ENCODE measurements at regions of chr18 and their contacts with region 1.

Region 1: DNA sequence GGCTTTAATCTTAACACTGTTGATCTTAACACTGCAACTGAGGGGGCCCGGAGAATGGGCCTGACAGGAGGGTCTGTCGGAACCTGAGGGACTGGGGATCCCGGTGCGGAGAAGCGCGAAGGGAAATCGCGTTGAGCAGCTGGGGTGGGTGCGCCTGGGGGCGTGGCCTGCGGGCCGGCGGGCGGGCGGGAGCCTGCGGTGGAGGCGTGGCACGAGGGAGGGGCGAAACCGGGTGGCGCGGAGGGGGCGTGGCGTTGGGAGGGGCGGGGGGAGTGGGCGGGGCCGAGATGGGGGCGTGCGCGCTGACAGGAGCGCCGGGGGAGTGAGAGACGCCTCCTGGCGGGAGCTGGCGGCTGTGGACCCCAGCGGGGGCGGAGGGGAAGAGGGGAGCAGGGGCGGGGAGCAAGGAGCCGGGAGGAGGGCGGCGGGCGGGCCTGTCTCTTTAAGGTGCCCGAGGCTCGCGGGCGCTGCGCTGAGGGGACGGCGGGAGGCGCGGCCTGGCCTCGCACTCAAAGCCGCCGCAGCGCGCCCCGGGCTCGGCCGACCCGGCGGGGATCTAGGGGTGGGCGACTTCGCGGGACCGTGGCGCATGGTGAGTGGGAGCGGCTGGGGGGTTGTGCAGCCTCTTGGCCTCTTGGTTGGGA is at the start of gene TWSG1:
- DNase-seq: peak; percentile 89 to 96 (median 93)
- ATAC-seq: peak; percentile 88
- H3K4me3 ChIP-seq: peak within 1 kb of the TSS; percentile 80
- H3K4me3 Mint-ChIP-seq: peak within 1 kb of the TSS; percentile 95
- H3K27ac ChIP-seq: peak within 1 kb of the TSS; percentile 36 to 40
- H3K27ac Mint-ChIP-seq: peak within 1 kb of the TSS; percentile 88
- H3K4me1 ChIP-seq: peaks cover 13% of the 10 kb centered on the region
- H3K4me1 Mint-ChIP-seq: peaks cover 25% of the 10 kb centered on the region
- H3K27me3 ChIP-seq: no peaks in the 10 kb centered on the region
- H3K27me3 Mint-ChIP-seq: no peaks in the 10 kb centered on the region
- CTCF ChIP-seq: peak; percentile 35
- total RNA-seq, gene TWSG1: 2.8 TPM

Region 2: GRCh38 chr18:8608795-8609658 is 725.4 kb before region 1 on chr18 and contains the start of gene RAB12:
- CTCF ChIA-PET with region 1: no interaction called
- POLR2A ChIA-PET with region 1: interaction called, 8 read pairs
- intact Hi-C with region 1: loop called in 1 of 2 experiments (anchors 10 kb)
- DNase-seq: peak; percentile 74 to 95 (median 86)
- ATAC-seq: peak; percentile 84
- H3K4me3 ChIP-seq: peak within 1 kb of the TSS; percentile 92
- H3K4me3 Mint-ChIP-seq: peak within 1 kb of the TSS; percentile 92
- H3K27ac ChIP-seq: peak within 1 kb of the TSS in 1 of 2 donors; percentile 71
- H3K27ac Mint-ChIP-seq: peak within 1 kb of the TSS; percentile 87
- H3K4me1 ChIP-seq: peaks cover 40% of the 10 kb centered on the region
- H3K4me1 Mint-ChIP-seq: peaks cover 58% of the 10 kb centered on the region
- H3K27me3 ChIP-seq: no peaks in the 10 kb centered on the region
- H3K27me3 Mint-ChIP-seq: peaks cover 8% of the 10 kb centered on the region
- CTCF ChIP-seq: peak; percentile 61
- total RNA-seq, gene RAB12: 20.1 to 20.3 TPM

Region 3: GRCh38 chr18:9082711-9083510 is 251.5 kb before region 1 on chr18:
- CTCF ChIA-PET with region 1: no interaction called
- POLR2A ChIA-PET with region 1: interaction called, 8 read pairs
- intact Hi-C with region 1: loop called (anchors 5 to 10 kb)
- DNase-seq: peak in 6 of 14 experiments; percentile 8 to 78 (median 52)
- ATAC-seq: peak; percentile 85
- H3K4me3 ChIP-seq: peak overlapping the region; percentile 1
- H3K4me3 Mint-ChIP-seq: peak overlapping the region; percentile 69
- H3K27ac ChIP-seq: peak overlapping the region; percentile 60 to 68
- H3K27ac Mint-ChIP-seq: peak overlapping the region; percentile 88
- H3K4me1 ChIP-seq: peaks cover 33% of the 10 kb centered on the region
- H3K4me1 Mint-ChIP-seq: peaks cover 28% of the 10 kb centered on the region
- H3K27me3 ChIP-seq: no peaks in the 10 kb centered on the region
- H3K27me3 Mint-ChIP-seq: no peaks in the 10 kb centered on the region
- CTCF ChIP-seq: no peak

Region 4: DNA sequence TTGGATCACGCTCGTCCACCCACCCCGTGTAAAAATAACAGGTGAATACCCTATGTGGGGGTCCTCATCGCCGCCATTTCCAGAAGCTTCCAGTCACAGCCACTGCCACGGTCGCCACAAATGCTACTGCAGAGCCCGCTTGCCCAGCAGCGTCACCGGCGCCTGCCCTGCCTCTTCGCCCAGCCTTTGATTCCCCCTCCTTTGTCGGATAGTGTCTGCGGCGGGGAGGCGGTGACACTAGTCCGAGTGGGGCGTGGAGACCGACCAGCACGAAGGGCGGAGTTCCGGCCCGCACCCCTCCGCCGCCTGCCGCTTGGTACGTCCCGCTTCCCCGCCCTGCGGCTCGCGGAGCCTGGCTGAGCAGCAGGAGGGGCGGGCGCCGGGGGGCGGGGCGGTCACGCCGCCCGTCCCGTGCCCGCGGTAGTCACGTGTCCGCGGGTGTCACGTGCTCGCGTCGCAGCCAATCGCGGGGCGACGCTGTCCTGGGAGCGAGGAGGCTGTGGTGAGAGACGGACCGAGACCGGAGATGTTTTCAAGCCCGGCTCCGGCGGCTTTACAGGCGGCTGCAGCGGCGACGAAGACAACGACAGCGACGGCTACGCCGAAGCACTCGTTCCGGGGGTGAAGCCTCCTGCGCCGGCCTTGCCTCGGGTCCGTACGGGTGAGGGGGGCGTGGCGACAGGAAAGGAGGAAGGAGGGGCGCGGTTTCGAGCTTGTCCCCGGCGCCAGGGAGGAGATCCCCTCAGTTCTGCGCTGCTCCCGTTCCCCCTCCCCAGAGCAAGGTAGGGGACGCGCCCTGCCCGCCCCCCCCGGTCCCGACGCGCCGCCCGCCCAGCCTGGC is 197.9 kb before region 1 on chr18 and contains the start of gene ANKRD12:
- CTCF ChIA-PET with region 1: interaction called, 6 read pairs
- POLR2A ChIA-PET with region 1: interaction called, 24 read pairs
- intact Hi-C with region 1: loop called in 1 of 2 experiments (anchors 5 kb)
- DNase-seq: peak; percentile 94 to 99 (median 98)
- ATAC-seq: peak; percentile 70
- H3K4me3 ChIP-seq: peak within 1 kb of the TSS; percentile 83
- H3K4me3 Mint-ChIP-seq: peak within 1 kb of the TSS; percentile 98
- H3K27ac ChIP-seq: peak within 1 kb of the TSS; percentile 94 to 96
- H3K27ac Mint-ChIP-seq: peak within 1 kb of the TSS; percentile 99
- H3K4me1 ChIP-seq: peaks cover 24% of the 10 kb centered on the region
- H3K4me1 Mint-ChIP-seq: peaks cover 75% of the 10 kb centered on the region
- H3K27me3 ChIP-seq: no peaks in the 10 kb centered on the region
- H3K27me3 Mint-ChIP-seq: no peaks in the 10 kb centered on the region
- CTCF ChIP-seq: no peak
- total RNA-seq, gene ANKRD12: 160 to 164 TPM

Region 5: DNA sequence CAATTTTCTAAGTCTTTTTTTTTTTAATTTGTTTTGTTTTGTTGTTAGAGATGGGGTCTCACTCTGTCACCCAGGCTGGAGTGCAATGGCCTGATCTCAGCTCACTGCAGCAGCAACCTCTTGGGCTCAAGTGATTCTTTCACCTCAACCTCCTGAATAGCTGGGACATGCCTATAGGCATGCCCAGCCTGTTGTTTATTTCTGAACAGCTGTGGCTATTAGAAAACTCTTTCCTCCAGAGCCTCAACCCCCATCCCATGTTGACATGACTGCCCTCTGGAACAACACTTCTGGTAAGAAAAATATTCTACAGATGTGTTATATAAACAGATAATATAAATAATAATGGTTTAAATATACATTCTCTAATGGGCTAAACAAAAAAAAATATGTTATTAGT is 44.3 kb before region 1 on chr18:
- CTCF ChIA-PET with region 1: no interaction called
- POLR2A ChIA-PET with region 1: no interaction called
- intact Hi-C with region 1: no loop called
- DNase-seq: no peak
- ATAC-seq: no peak
- H3K4me3 ChIP-seq: no peak overlapping the region
- H3K4me3 Mint-ChIP-seq: no peak overlapping the region
- H3K27ac ChIP-seq: no peak overlapping the region
- H3K27ac Mint-ChIP-seq: no peak overlapping the region
- H3K4me1 ChIP-seq: no peaks in the 10 kb centered on the region
- H3K4me1 Mint-ChIP-seq: no peaks in the 10 kb centered on the region
- H3K27me3 ChIP-seq: no peaks in the 10 kb centered on the region
- H3K27me3 Mint-ChIP-seq: no peaks in the 10 kb centered on the region
- CTCF ChIP-seq: no peak

Region 6: GRCh38 chr18:9516437-9517064 is 182.1 kb after region 1 on chr18:
- CTCF ChIA-PET with region 1: no interaction called
- POLR2A ChIA-PET with region 1: no interaction called
- intact Hi-C with region 1: loop called in 1 of 2 experiments (anchors 10 kb)
- DNase-seq: peak in 4 of 14 experiments; percentile 18 to 62 (median 56)
- ATAC-seq: peak; percentile 65
- H3K4me3 ChIP-seq: no peak overlapping the region
- H3K4me3 Mint-ChIP-seq: no peak overlapping the region
- H3K27ac ChIP-seq: no peak overlapping the region
- H3K27ac Mint-ChIP-seq: no peak overlapping the region
- H3K4me1 ChIP-seq: no peaks in the 10 kb centered on the region
- H3K4me1 Mint-ChIP-seq: peaks cover 12% of the 10 kb centered on the region
- H3K27me3 ChIP-seq: no peaks in the 10 kb centered on the region
- H3K27me3 Mint-ChIP-seq: no peaks in the 10 kb centered on the region
- CTCF ChIP-seq: peak; percentile 96

Region 7: DNA sequence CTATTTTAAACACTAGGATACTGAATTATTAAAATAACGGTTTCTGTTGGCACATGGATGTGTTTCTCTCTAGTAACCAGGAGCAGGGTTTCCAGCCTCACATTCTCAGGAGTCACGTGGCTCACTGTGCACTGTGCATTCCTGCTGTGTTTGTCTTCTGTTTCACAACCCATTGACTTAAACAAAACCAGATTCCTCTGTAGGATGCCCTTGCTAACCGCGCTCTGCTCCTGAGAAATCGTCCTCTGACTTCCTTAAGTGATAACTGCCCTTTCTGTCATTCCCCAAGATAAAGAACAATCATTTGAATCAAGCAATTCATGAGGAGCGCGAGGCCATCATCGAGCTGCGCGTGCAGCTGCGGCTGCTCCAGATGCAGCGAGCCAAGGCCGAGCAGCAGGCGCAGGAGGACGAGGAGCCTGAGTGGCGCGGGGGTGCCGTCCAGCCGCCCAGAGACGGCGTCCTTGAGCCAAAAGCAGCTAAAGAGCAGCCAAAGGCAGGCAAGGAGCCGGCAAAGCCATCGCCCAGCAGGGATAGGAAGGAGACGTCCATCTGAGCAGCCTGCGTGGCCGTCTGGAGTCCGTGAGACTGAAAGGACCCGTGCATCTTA is 201.0 kb after region 1 on chr18:
- CTCF ChIA-PET with region 1: no interaction called
- POLR2A ChIA-PET with region 1: no interaction called
- intact Hi-C with region 1: no loop called
- DNase-seq: no peak
- ATAC-seq: no peak
- H3K4me3 ChIP-seq: no peak overlapping the region
- H3K4me3 Mint-ChIP-seq: no peak overlapping the region
- H3K27ac ChIP-seq: no peak overlapping the region
- H3K27ac Mint-ChIP-seq: no peak overlapping the region
- H3K4me1 ChIP-seq: no peaks in the 10 kb centered on the region
- H3K4me1 Mint-ChIP-seq: no peaks in the 10 kb centered on the region
- H3K27me3 ChIP-seq: no peaks in the 10 kb centered on the region
- H3K27me3 Mint-ChIP-seq: no peaks in the 10 kb centered on the region
- CTCF ChIP-seq: no peak

Region 8: DNA sequence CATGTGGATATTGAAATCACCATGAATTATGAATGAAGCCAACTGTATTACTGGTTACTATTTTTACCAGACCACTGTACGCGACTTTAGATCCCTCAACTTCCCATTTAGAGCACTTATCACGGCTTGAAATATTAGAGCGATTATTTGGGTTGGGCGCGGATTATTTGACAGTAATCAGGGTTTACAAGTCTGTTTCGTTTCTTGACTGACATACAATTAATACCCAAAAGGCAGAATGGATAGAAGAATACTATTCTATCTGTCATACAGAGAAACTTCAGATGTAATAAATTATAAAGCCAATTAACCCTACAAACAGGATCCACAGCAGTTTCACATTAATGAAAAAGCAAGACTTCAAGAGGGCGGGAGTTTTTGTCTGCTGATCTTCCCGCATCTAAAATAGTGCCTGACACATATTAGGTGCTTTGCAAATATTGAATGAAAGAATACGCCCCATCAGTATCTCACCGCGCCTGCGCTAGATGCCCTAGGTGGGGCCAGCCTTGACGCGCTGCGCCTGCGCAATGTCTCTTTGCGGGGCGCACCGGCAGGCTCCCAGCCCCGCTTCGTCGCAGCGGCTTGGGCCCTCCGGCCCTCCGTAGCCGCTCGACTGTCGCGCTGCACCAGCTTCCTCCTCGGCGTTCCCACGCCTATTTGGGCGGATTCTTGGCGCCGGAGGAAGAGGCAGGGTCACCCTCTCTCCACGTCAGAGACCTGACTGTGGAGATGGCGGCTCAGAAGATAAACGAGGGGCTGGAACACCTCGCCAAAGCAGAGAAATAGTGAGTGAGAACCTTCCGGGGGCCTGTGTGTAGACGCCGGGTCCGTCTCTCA is 1191.1 kb after region 1 on chr18 and contains the start of gene NAPG:
- CTCF ChIA-PET with region 1: no interaction called
- POLR2A ChIA-PET with region 1: no interaction called
- intact Hi-C with region 1: loop called in 1 of 2 experiments (anchors 5 kb)
- DNase-seq: peak; percentile 75 to 98 (median 86)
- ATAC-seq: peak; percentile 85
- H3K4me3 ChIP-seq: peak within 1 kb of the TSS; percentile 87
- H3K4me3 Mint-ChIP-seq: peak within 1 kb of the TSS; percentile 99
- H3K27ac ChIP-seq: peak within 1 kb of the TSS; percentile 55 to 86
- H3K27ac Mint-ChIP-seq: peak within 1 kb of the TSS; percentile 96
- H3K4me1 ChIP-seq: peaks cover 42% of the 10 kb centered on the region
- H3K4me1 Mint-ChIP-seq: peaks cover 56% of the 10 kb centered on the region
- H3K27me3 ChIP-seq: peaks cover 0 to 5% of the 10 kb centered on the region in 2 experiments
- H3K27me3 Mint-ChIP-seq: no peaks in the 10 kb centered on the region
- CTCF ChIP-seq: no peak
- total RNA-seq, gene NAPG: 25.9 to 27.3 TPM

Measured in CD4-positive, alpha-beta T cell (primary cell).